AG04449 (cell line): ENCODE measurements at regions of chr17 and their contacts with region 1.

Region 1: DNA sequence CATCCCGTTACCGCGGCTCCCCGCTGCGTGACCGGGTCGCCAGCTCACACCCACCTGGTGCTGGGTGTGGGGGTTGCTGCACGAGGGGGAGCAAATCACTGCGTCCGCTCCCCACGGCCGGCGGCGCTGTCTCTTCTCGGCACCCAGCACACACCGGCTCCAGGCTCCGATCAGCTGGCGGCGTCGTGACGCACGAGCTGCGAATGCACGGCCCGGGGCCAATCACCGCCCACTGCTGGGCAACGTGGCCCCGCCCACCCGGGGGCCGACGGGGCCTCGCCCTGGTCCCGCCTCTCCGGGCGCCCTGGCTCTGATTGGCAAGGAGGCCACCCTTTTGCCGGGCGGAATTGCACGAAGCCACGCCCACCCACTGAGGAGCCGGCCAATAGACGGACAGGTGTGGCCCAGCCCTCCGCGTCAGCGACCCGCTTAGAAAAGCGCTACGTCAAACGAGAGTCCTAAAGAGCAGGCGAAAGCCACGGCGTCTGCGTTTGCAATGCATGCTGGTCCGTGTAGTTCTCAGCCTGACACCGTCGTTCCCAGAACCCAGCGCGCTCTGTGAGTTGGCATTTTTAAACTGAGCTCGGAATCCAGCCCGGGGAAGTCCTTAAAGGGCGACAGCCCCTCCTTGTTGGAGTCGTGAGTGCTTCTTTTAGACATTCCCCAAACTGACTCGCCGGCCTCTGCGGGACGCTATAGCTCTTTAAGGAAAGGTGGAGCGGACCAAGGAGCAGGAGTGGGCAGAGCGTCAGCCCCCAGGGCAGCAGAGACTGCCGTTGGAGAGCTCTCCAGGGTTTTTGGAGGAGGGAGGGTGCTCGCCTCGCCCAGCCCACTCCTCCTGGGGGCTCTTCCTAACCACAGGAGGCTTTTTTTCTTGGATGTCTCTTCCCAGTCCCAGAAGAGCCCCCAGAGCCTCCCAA is 6.2 kb upstream of the TLCD2 start:
- DNase-seq: peak; percentile 99
- H3K4me3 ChIP-seq: peak overlapping the region; percentile 97
- CTCF ChIP-seq: peak; percentile 31

Region 2: DNA sequence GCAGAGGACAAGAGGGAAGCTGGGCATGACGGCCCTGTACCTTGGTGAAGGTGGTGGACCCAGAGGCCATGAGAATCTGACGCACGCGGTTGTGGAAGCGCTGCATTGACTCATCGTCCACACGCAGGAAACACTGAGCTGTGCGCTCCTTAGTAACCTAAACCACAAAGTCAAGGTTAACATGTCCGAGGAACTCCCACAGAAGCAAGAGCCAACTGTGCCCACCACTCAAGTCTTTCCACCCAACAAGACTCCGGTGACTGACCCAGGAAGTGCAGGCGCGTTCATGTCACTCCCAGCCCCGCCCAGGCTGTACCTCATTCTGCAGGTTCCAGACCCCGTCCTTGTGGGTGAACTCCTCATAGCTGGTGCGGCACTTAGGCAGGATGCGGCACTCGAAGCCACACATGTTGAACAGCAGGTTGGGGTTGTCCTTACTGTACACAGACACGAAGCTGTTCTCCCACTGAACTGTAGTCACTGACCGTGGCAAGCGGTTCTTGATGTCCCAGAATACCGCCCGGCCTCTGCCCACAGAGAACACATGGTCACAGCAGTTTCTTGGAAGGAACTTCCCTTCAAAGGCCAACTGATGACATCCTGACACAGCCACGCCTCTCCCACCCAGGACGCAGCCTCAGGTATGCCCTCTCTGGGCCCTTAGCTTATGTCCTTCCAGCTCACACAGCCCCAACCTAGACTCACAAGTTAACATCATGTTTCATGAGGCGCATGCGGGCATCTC is 43.1 kb before region 1 on chr17:
- CTCF ChIA-PET with region 1: interaction called, 16 read pairs
- POLR2A ChIA-PET with region 1: interaction called, 5 read pairs
- DNase-seq: no peak
- H3K4me3 ChIP-seq: no peak overlapping the region
- CTCF ChIP-seq: no peak

Region 3: GRCh38 chr17:1730328-1731193 is 14.2 kb after region 1 on chr17:
- CTCF ChIA-PET with region 1: interaction called, 14 read pairs
- POLR2A ChIA-PET with region 1: interaction called, 14 read pairs
- DNase-seq: no peak
- H3K4me3 ChIP-seq: no peak overlapping the region
- CTCF ChIP-seq: no peak

Region 4: GRCh38 chr17:1773696-1774181 is 57.4 kb after region 1 on chr17:
- CTCF ChIA-PET with region 1: interaction called, 10 read pairs
- POLR2A ChIA-PET with region 1: interaction called, 11 read pairs
- DNase-seq: no peak
- H3K4me3 ChIP-seq: no peak overlapping the region
- CTCF ChIP-seq: no peak

Region 5: DNA sequence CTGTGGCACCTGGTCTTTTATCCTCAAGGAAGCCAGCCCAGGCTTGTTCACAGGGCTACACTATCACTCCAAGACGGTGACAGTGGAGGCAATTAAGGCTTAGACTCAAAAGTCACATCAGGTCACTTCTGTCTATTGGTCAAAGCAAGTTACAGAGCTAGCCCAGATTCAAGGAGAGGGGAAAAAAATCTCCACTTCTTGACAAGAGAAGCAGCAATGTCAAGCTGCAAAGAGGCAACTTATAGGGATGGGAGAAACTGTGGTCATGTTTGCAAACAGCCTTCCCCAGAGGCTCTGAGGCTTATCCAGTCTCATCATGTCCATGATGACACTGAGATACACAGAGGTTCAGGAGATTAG is 77.1 kb after region 1 on chr17:
- CTCF ChIA-PET with region 1: interaction called, 180 read pairs
- POLR2A ChIA-PET with region 1: interaction called, 11 read pairs
- DNase-seq: no peak
- H3K4me3 ChIP-seq: no peak overlapping the region
- CTCF ChIP-seq: no peak

Region 6: DNA sequence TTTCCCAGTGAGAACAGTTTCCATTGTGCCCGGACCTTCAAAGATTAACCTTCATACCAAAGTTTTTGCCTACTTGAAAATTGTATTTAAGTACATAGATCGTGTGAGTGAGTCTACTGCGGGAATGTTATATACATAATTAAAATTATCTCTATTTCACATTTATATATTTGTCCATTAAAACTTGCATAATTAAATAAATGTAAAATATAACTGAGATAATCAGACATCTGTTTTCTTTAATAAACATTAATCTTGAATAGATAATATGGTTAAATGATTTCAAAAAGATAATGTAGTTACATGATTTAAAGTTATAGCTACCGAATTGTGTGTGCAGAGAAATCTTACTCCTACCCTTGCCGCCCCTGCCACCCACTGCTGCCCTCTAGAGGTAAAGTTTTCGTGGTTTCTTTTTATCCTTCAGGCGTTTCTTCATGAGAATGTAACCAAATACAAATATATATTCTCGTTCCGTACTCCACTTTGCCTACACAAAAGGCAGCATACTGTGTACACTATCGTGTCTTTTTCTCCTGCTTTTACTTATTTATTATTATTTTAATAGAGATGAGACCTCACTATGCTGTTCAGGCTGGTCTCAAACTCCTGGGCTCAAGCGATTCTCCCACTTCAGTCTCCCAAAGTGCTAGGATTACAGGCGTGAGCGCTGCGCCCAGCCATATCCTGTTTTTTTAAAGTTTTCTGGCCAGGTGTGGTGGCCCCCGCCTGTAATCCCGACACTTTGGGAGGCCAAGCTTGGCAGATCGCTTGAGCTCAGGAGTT is 149.1 kb after region 1 on chr17:
- CTCF ChIA-PET with region 1: interaction called, 10 read pairs
- POLR2A ChIA-PET with region 1: no interaction called
- DNase-seq: no peak
- H3K4me3 ChIP-seq: no peak overlapping the region
- CTCF ChIP-seq: peak; percentile 34